ENCODE measurements at regions of chr19 and their contacts with region 1.

Region 1: DNA sequence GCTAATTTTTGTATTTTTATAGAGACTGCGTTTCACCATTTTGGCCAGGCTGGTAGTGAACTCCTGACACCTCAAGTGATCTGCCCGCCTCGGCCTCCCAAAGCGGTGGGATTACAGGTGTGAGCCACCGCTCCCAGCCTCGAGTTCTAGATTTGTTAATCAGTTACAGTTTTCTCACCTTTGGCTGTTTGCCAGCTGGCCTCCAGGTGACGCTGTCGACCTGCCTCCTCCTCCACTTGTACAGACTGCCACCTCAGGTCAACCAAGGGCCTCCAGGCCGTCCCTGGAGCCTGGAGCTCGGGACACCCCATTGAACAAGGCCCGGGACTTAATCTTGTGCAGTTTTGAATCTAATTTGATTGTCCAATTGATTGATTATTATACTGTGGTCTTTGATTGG is 45.5 kb downstream of the IER2 start:
- DNase-seq: peak; percentile 69
- ATAC-seq: peak; percentile 63
- H3K4me3 Mint-ChIP-seq: no peak overlapping the region
- H3K27ac Mint-ChIP-seq: no peak overlapping the region
- H3K4me1 Mint-ChIP-seq: peaks cover 23% of the 10 kb centered on the region
- H3K27me3 Mint-ChIP-seq: no peaks in the 10 kb centered on the region
- CTCF ChIP-seq: peak; percentile 49

Region 2: GRCh38 chr19:13172068-13172896 is 23.4 kb before region 1 on chr19:
- CTCF ChIA-PET with region 1: interaction called, 36 read pairs
- POLR2A ChIA-PET with region 1: interaction called, 5 read pairs
- intact Hi-C with region 1: no loop called
- DNase-seq: peak; percentile 93
- ATAC-seq: peak; percentile 17
- H3K4me3 Mint-ChIP-seq: peak overlapping the region; percentile 90
- H3K27ac Mint-ChIP-seq: peak overlapping the region; percentile 98
- H3K4me1 Mint-ChIP-seq: peaks cover 52% of the 10 kb centered on the region
- H3K27me3 Mint-ChIP-seq: no peaks in the 10 kb centered on the region
- CTCF ChIP-seq: no peak

Region 3: DNA sequence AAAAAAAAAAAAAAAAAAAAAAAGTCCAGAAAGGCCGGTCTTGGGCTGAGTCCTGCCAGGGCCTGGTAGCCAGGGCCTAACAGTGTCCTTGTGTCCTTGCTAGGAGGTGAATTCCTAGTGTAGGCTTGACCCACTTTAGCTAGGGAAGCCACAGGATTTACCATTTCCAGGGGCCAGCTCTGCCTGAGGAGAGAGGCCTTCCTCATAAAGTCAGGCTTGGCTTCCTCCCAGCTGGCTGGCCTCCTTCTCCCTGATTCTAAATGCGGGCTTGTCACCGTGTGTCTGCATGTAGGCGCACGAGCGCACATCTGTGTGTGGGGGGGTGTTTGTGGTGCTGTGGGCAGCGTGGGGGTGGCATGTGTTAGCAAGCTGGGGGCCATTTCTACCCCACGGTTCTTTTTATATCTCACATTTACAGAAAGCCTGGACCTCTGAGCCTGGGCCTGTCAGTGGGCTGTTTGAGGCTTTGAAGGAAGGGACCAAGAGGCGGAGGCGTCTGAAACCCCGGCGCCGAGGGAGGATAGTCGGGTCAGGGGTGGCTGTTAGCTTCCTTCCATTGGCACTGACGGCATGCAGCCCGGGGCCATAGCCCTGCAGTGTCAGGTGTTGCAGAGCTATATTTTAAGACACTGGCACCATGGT is 13.8 kb before region 1 on chr19:
- CTCF ChIA-PET with region 1: interaction called, 45 read pairs
- POLR2A ChIA-PET with region 1: interaction called, 3 read pairs
- intact Hi-C with region 1: no loop called
- DNase-seq: peak; percentile 86
- ATAC-seq: peak; percentile 81
- H3K4me3 Mint-ChIP-seq: peak overlapping the region; percentile 37
- H3K27ac Mint-ChIP-seq: peak overlapping the region; percentile 86
- H3K4me1 Mint-ChIP-seq: peaks cover 28% of the 10 kb centered on the region
- H3K27me3 Mint-ChIP-seq: no peaks in the 10 kb centered on the region
- CTCF ChIP-seq: no peak

Region 4: GRCh38 chr19:13207237-13207845 is 11.7 kb after region 1 on chr19:
- CTCF ChIA-PET with region 1: interaction called, 22 read pairs
- POLR2A ChIA-PET with region 1: interaction called, 3 read pairs
- intact Hi-C with region 1: no loop called
- DNase-seq: no peak
- ATAC-seq: no peak
- H3K4me3 Mint-ChIP-seq: no peak overlapping the region
- H3K27ac Mint-ChIP-seq: no peak overlapping the region
- H3K4me1 Mint-ChIP-seq: peaks cover 21% of the 10 kb centered on the region
- H3K27me3 Mint-ChIP-seq: no peaks in the 10 kb centered on the region
- CTCF ChIP-seq: no peak

Region 5: DNA sequence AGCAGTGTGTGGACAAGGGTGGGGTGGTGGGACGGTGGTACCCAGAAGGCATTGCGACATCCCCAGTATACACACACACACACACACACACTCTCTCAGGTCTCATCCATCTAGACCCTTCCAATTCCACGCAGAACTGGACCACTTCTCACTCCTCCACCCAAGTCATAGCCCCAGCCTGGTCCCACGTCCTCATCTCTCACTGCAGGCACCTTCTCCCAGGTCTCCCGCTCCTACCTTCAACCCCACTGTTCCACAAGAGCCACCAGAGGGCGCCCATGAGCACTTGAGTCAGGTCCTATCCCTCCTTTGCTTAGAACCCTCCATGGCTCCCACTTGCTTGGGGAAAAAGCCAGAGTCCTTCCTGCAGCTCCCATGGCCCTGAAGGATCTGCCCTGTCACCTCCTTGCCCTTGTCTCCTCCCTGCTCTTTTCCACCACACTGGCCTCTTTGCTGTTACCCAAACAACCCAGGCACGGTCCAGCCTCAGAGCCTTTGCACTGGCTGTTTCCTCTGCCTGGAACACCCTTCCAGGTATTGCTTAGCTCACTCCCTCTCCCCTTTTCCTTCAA is 17.2 kb after region 1 on chr19:
- CTCF ChIA-PET with region 1: interaction called, 21 read pairs
- POLR2A ChIA-PET with region 1: interaction called, 3 read pairs
- intact Hi-C with region 1: no loop called
- DNase-seq: peak; percentile 86
- ATAC-seq: peak; percentile 38
- H3K4me3 Mint-ChIP-seq: no peak overlapping the region
- H3K27ac Mint-ChIP-seq: no peak overlapping the region
- H3K4me1 Mint-ChIP-seq: peaks cover 36% of the 10 kb centered on the region
- H3K27me3 Mint-ChIP-seq: no peaks in the 10 kb centered on the region
- CTCF ChIP-seq: peak; percentile 73

Region 6: GRCh38 chr19:13244920-13245319 is 49.2 kb after region 1 on chr19:
- CTCF ChIA-PET with region 1: interaction called, 11 read pairs
- POLR2A ChIA-PET with region 1: no interaction called
- intact Hi-C with region 1: no loop called
- DNase-seq: no peak
- ATAC-seq: no peak
- H3K4me3 Mint-ChIP-seq: no peak overlapping the region
- H3K27ac Mint-ChIP-seq: no peak overlapping the region
- H3K4me1 Mint-ChIP-seq: peaks cover 17% of the 10 kb centered on the region
- H3K27me3 Mint-ChIP-seq: no peaks in the 10 kb centered on the region
- CTCF ChIP-seq: no peak

Region 7: DNA sequence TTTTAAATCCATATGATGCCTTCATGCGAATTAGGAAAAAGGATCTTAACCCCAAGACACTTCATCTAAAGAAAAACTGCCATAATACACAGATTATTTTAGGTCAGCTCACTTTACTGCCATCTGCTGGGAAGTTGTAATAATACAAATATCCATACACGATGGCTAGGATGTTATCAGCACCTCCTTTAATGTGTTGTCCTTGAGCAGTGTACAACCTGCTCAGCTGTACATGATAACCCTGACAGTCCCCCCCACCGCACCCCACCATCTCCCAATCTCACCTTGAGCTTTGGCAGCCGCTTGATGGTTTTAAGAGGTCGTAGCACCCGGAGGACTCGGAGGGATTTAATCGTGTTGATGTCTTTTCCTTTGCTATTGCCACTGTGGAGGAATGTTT is 66.8 kb after region 1 on chr19:
- CTCF ChIA-PET with region 1: interaction called, 40 read pairs
- POLR2A ChIA-PET with region 1: no interaction called
- intact Hi-C with region 1: loop called (anchors 1 kb)
- DNase-seq: no peak
- ATAC-seq: peak; percentile 63
- H3K4me3 Mint-ChIP-seq: no peak overlapping the region
- H3K27ac Mint-ChIP-seq: no peak overlapping the region
- H3K4me1 Mint-ChIP-seq: peaks cover 16% of the 10 kb centered on the region
- H3K27me3 Mint-ChIP-seq: peaks cover 11% of the 10 kb centered on the region
- CTCF ChIP-seq: peak; percentile 81

Measured in activated CD8-positive, alpha-beta T cell treated with anti-CD3 and anti-CD28 coated beads for 36 hours (primary cell).